Mammary epithelial cell (primary cell): ENCODE measurements at regions of chr11 and their contacts with region 1.

Region 1: GRCh38 chr11:79062814-79063762 is 377.7 kb downstream of the TENM4 start:
- DNase-seq: peak; percentile 27
- H3K4me3 ChIP-seq: no peak overlapping the region
- H3K27ac ChIP-seq: no peak overlapping the region
- H3K4me1 ChIP-seq: no peaks in the 10 kb centered on the region
- H3K27me3 ChIP-seq: no peaks in the 10 kb centered on the region
- CTCF ChIP-seq: peak; percentile 35 to 55

Region 2: GRCh38 chr11:79100093-79100910 is 37.2 kb after region 1 on chr11:
- CTCF ChIA-PET with region 1: interaction called, 4 read pairs
- dilution Hi-C with region 1: no loop called
- in situ Hi-C with region 1: no loop called
- intact Hi-C with region 1: loop called (anchors 1 kb)
- DNase-seq: peak; percentile 26
- H3K4me3 ChIP-seq: no peak overlapping the region
- H3K27ac ChIP-seq: no peak overlapping the region
- H3K4me1 ChIP-seq: no peaks in the 10 kb centered on the region
- H3K27me3 ChIP-seq: no peaks in the 10 kb centered on the region
- CTCF ChIP-seq: peak; percentile 74 to 87

Region 3: DNA sequence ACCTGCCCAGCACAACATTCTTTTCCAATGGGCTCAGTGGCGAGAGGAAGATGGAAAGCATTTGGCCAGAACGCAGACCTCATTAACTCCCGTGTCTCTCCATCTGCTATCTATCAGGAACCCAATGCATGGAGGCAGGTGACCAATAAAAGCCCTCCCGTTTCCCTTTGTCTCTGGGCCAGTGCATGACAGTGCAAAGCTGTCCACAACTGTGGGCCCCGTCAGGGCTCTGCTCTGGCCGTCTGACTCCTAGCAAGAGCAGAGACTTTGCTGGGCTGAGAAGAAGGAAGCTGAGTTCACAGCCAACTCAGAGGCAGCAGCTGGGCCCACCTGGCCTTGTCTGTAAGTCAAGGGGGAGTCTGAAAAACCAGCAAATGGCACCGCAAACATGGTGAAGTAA is 199.9 kb after region 1 on chr11:
- CTCF ChIA-PET with region 1: no interaction called
- dilution Hi-C with region 1: no loop called
- in situ Hi-C with region 1: no loop called
- intact Hi-C with region 1: loop called (anchors 10 kb)
- DNase-seq: no peak
- H3K4me3 ChIP-seq: no peak overlapping the region
- H3K27ac ChIP-seq: no peak overlapping the region
- H3K4me1 ChIP-seq: no peaks in the 10 kb centered on the region
- H3K27me3 ChIP-seq: no peaks in the 10 kb centered on the region
- CTCF ChIP-seq: no peak